ENCODE measurements at regions of chr18 and their contacts with region 1.

Region 1: DNA sequence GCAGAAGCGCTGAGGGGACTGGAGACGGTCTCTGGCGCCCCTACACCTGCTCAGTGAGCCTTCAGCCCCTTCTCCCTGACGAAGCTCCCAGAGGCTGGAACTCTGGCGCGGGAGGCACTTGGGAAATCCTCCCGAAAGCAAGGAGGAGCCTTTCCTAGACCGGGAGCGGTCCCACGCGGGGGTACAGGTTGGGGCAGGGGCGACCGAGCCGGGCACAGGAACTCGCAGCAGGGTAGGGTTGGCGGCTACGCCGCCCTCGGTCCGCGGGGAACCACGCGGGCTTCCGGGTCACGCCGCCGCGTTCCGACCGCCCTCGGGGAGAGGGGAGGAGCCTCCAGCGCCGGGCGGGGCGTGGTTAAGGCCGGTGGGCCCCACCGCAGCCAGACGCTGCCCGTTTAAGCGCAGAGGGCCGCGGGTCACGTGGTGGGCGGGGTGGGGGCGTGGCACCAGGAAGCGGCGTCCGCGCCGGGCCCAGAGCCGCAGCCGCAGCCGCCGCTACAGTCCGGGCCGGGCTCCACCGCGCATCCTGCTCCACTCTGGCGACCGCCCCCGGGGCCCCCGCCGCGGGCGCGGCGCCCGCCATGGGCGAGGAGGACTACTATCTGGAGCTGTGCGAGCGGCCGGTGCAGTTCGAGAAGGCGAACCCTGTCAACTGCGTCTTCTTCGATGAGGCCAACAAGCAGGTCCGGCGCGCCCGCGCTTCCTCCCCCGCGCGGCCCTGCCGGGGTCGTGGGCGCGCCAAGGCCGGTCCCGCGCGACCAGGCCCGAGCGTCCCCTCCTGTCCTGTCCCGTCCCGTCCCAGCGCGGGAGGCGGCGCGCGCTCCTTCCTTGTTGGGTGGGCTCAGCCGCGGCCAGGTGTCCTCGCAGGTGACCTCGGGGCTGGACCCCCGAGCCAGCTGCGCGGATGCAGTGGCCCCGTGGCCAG is at the start of gene RMC1:
- DNase-seq: peak; percentile 54 to 92
- ATAC-seq: peak; percentile 86 to 89
- H3K4me3 ChIP-seq: peak within 1 kb of the TSS; percentile 71
- H3K27ac ChIP-seq: peak within 1 kb of the TSS; percentile 83 to 90
- H3K4me1 ChIP-seq: peaks cover 10% of the 10 kb centered on the region
- CTCF ChIP-seq: no peak
- EP300 ChIP-seq: no peak
- POLR2A ChIP-seq: peak; percentile 73
- RAD21 ChIP-seq: peak in 1 of 2 experiments; percentile 39; a peak in 2 of 5 replicates
- polyA plus RNA-seq, gene RMC1: 17.5 and 28.5 TPM in 2 replicates

Region 2: GRCh38 chr18:23448291-23448690 is 55.0 kb before region 1 on chr18:
- CTCF ChIA-PET with region 1: no interaction called
- POLR2A ChIA-PET with region 1: no interaction called
- DNase-seq: no peak
- ATAC-seq: no peak
- H3K4me3 ChIP-seq: no peak overlapping the region
- H3K27ac ChIP-seq: no peak overlapping the region
- H3K4me1 ChIP-seq: peaks cover 9% of the 10 kb centered on the region
- CTCF ChIP-seq: no peak
- EP300 ChIP-seq: no peak
- POLR2A ChIP-seq: no peak
- RAD21 ChIP-seq: no peak

Region 3: DNA sequence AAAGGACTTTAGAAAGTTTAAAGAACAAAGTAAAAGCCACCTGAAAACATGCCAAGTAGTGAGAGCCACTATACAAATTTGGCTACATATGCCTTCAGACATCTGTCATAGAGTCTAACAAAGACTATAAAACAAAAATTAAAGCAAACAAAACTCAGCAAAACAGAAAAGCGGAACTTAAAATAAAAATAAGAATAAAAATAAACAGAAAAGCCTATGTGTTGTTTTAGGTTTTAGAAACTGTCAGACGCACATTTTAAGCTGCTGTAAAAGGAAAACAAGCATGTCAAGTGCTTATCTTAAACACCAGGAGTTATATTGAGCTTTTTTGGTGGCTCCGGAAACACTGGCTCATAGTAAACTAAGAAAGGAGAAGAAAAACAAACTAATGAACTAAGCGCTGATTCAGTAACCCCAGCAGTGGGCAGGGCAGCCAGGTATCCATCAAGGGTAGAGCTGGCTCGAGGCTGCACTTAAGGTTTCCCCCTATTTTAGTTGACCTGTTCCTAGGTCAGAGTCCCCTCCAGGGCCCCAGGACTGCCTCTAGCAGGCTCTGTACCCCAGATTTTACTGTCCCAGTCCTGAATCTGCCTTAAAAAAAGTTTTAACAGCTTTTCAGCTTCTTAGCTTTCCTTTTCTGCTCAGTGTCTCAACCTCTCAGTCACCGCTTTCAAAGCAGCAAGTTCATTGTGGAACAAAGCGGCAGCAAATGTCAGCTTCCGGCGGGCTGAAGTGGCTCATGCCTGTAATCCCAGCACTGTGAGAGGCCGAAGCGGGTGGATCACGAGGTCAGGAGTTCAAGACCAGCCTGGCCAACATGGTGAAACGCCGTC is 15.3 kb before region 1 on chr18:
- CTCF ChIA-PET with region 1: interaction called, 15 read pairs
- POLR2A ChIA-PET with region 1: no interaction called
- DNase-seq: no peak
- ATAC-seq: peak; percentile 58 to 64; a peak in 2 of 6 replicates
- H3K4me3 ChIP-seq: no peak overlapping the region
- H3K27ac ChIP-seq: no peak overlapping the region
- H3K4me1 ChIP-seq: no peaks in the 10 kb centered on the region; the same call in 2 of the 3 replicates
- CTCF ChIP-seq: no peak
- EP300 ChIP-seq: no peak
- POLR2A ChIP-seq: no peak
- RAD21 ChIP-seq: no peak

Region 4: DNA sequence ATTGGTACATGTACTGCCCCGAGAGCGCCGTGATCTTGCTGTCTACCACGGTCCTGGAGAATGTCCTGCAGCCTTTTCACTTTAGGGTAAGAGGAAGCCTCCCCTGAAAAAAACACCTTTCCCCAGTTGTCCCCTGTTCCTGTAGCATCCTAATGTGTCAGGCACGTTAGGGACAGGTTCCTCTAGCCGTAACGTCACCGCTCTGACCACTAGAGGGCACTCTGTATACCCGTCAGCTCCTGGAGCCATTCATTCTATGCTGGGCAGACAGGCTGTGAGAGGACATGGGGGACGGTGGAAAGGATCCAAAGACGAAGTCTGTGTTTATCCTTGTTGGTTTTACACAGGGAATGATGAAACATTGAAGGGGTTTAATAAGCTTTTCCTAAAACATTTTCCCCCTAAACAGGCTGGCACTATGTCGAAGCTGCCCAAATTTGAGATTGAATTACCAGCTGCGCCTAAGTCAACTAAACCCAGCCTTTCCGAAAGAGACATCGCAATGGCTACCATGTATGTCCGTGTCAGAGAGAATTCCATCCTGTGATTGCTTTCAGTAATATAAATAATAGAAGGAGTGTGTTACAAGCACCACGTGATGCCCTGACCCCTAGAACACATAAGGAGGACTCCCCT is 12.7 kb after region 1 on chr18:
- CTCF ChIA-PET with region 1: interaction called, 18 read pairs
- POLR2A ChIA-PET with region 1: no interaction called
- DNase-seq: peak; percentile 42 to 77
- ATAC-seq: peak; percentile 98 to 99
- H3K4me3 ChIP-seq: no peak overlapping the region
- H3K27ac ChIP-seq: no peak overlapping the region
- H3K4me1 ChIP-seq: no peaks in the 10 kb centered on the region
- CTCF ChIP-seq: peak; percentile 71
- EP300 ChIP-seq: no peak
- POLR2A ChIP-seq: no peak
- RAD21 ChIP-seq: peak; percentile 59 to 73

Measured in A549 (cell line).